ENCODE measurements at regions of chr1 and their contacts with region 1.

Region 1: DNA sequence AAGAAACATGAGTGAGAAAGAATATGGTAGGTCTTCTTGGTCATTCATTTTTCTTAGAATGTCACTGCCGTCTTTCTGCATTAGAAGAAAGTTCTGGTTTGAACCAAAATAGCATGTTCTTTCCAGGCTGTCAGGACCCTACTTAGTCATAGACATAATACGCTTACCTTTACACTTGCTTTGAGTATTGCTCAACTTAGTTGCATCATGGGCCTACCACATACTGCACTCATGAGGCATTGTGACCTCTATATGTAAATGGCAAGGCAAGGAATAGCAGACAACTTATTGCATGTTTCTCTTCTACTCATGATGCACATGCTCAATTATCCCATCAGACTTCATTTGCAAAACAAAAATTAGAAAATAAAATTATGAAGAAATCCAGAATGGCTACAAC is 415.0 kb downstream of the HLX start:
- DNase-seq: no peak
- ATAC-seq: no peak
- H3K4me3 ChIP-seq: no peak overlapping the region
- H3K4me3 Mint-ChIP-seq: no peak overlapping the region
- H3K27ac ChIP-seq: no peak overlapping the region
- H3K27ac Mint-ChIP-seq: no peak overlapping the region
- H3K4me1 ChIP-seq: no peaks in the 10 kb centered on the region
- H3K4me1 Mint-ChIP-seq: no peaks in the 10 kb centered on the region
- H3K27me3 ChIP-seq: no peaks in the 10 kb centered on the region
- H3K27me3 Mint-ChIP-seq: no peaks in the 10 kb centered on the region
- CTCF ChIP-seq: no peak

Region 2: GRCh38 chr1:221509575-221510355 is 215.5 kb after region 1 on chr1:
- CTCF ChIA-PET with region 1: no interaction called
- POLR2A ChIA-PET with region 1: no interaction called
- intact Hi-C with region 1: no loop called
- DNase-seq: no peak
- ATAC-seq: no peak
- H3K4me3 ChIP-seq: no peak overlapping the region
- H3K4me3 Mint-ChIP-seq: no peak overlapping the region
- H3K27ac ChIP-seq: no peak overlapping the region
- H3K27ac Mint-ChIP-seq: no peak overlapping the region
- H3K4me1 ChIP-seq: no peaks in the 10 kb centered on the region
- H3K4me1 Mint-ChIP-seq: no peaks in the 10 kb centered on the region
- H3K27me3 ChIP-seq: no peaks in the 10 kb centered on the region
- H3K27me3 Mint-ChIP-seq: peaks cover 3% of the 10 kb centered on the region
- CTCF ChIP-seq: no peak

Region 3: GRCh38 chr1:223056802-223057201 is 1762.6 kb after region 1 on chr1:
- CTCF ChIA-PET with region 1: no interaction called
- POLR2A ChIA-PET with region 1: no interaction called
- intact Hi-C with region 1: loop called in 1 of 2 experiments (anchors 5 kb)
- DNase-seq: no peak
- ATAC-seq: no peak
- H3K4me3 ChIP-seq: no peak overlapping the region
- H3K4me3 Mint-ChIP-seq: no peak overlapping the region
- H3K27ac ChIP-seq: no peak overlapping the region
- H3K27ac Mint-ChIP-seq: no peak overlapping the region
- H3K4me1 ChIP-seq: no peaks in the 10 kb centered on the region
- H3K4me1 Mint-ChIP-seq: no peaks in the 10 kb centered on the region
- H3K27me3 ChIP-seq: peaks cover 0 to 2% of the 10 kb centered on the region in 2 experiments
- H3K27me3 Mint-ChIP-seq: no peaks in the 10 kb centered on the region
- CTCF ChIP-seq: no peak